Activated CD4-positive, alpha-beta T cell treated with anti-CD3 and anti-CD28 coated beads for 36 hours (primary cell): ENCODE measurements at regions of chr17 and their contacts with region 1.

Region 1: DNA sequence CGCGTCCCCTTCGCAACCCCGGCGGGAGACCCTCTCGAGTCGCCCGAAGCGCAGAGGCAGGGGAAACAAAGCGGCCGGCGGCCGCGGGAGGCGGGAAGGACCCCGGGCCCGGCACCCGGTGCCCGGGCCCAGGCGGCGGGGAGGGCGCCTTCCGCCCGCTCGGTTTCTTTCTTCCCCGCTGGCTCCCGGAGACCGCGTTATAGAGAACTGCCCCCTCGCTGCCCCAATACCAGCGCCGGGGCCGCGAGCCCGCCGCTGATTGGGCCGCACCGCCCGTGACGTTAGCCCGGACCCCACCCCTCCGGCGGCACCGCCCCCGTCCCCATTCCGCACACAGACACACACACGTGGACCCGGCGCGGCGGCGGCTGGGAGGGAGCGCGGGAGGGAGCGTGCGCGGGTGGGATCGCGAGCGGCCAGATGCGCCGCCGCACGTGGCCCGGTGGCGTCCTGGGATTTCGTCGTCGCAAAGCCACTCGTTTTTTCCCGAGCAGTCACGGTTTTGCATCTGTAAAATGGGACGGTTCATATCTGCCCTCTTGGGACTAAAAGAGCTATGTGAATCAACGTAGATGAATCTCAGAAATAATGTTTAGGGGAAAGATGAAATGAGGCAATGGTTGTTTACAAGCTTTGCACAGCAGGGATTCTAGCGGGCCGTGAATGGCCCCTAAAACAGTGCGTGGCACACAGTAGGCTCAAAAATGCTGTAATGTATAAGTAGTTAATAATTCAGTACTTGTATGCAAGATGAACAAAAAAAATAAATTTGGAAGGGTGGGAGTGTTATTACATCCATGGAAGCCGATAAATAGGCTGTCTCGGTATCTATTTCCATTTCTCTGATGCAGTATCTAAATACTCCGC is at the start of gene EPOP:
- DNase-seq: peak; percentile 96
- ATAC-seq: peak; percentile 78
- H3K4me3 Mint-ChIP-seq: peak within 1 kb of the TSS; percentile 76
- H3K27ac Mint-ChIP-seq: peak within 1 kb of the TSS; percentile 85
- H3K4me1 Mint-ChIP-seq: peaks cover 47% of the 10 kb centered on the region
- H3K27me3 Mint-ChIP-seq: peaks cover 9% of the 10 kb centered on the region
- total RNA-seq, gene EPOP: 31.8 to 37.3 TPM

Region 2: DNA sequence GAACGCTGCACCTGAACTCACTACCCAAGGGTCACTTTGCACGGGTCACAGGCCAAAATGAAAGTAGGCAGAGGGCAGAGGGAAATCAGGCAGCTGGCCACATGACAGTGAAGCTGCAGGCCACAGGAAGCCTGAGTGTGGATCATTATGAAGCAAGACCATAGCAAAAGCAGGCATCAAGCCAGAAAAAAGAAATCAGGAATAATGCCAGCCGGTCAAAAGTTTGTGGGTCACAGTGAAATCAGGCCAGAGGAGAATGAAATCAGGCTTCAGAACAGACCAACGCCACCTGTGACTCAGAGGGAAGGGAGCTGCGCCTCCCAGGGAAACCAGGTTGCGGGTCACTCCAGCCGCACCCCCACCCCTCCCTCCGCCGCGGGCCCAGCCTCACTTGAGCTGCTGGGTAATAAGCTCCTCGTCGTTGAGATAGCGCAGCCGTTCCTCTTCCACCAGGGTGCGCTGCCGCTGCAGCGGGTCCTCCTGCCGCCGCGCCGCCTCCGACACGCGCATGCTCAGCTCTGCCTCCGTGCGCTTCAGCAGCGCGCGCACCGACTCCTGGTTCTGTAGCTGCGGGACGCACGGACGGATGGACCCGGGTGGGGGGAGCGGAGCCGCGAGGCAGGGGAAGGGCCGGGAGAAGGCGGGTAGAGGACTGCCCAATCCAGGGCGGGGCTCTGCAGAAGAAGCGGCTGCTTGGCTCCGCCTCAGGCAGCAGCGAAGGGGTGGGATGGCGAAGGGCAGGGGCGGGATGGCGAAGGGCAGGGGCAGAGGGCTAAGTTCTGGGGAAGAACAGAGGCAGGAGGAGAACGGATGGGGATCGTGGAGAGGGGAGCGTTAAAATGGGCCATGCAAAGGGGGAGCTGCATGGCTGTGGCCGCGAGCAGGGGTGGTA is 116.9 kb before region 1 on chr17:
- CTCF ChIA-PET with region 1: interaction called, 145 read pairs
- POLR2A ChIA-PET with region 1: no interaction called
- intact Hi-C with region 1: loop called in 1 of 2 experiments (anchors 2 kb)
- DNase-seq: peak; percentile 95
- ATAC-seq: peak; percentile 85
- H3K4me3 Mint-ChIP-seq: peak overlapping the region; percentile 73
- H3K27ac Mint-ChIP-seq: no peak overlapping the region
- H3K4me1 Mint-ChIP-seq: peaks cover 22% of the 10 kb centered on the region
- H3K27me3 Mint-ChIP-seq: peaks cover 23% of the 10 kb centered on the region

Region 3: DNA sequence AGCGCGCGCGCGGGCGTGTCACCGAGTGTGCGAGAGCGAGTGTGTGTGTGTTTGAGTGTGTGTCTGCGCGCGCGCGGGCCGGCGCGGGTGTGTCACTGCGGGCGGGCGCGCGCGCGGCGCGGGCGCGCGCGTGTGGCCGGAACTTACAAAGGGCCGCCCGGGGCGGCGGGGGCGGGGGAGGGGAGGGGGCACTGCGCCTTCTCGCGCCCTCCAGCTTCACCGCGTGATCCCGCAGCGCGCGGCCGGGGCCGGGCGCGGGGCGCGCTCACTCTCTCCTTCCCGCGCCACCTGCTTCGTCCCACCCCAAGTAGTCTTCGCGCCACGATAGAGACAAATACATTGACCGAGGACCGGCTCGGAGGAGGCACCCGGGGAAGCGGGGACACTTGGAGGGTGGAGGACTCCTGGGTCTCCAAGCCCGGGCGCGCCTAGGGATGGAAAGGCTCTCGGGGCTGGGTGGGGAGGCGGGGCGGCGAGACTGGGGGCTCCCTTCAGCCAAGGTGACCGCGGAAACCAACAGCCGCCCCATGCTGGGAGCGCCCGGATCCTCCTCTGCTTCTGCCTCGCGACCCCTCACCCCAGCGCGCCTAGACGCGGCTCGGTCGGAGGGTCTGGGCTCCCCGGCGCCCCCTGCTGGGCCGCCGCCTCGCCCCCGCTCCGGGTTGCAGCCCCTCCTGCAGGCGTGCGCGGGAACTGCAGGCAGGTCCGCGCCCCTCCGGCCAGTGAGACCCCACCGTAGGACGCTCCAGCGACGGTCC is 68.9 kb before region 1 on chr17 and contains the start of gene SRCIN1:
- CTCF ChIA-PET with region 1: interaction called, 4 read pairs
- POLR2A ChIA-PET with region 1: no interaction called
- intact Hi-C with region 1: loop called in 1 of 2 experiments (anchors 2 kb)
- DNase-seq: peak; percentile 79
- ATAC-seq: peak; percentile 42
- H3K4me3 Mint-ChIP-seq: peak within 1 kb of the TSS; percentile 66
- H3K27ac Mint-ChIP-seq: no peak within 1 kb of the TSS
- H3K4me1 Mint-ChIP-seq: peaks cover 16% of the 10 kb centered on the region
- H3K27me3 Mint-ChIP-seq: peaks cover 56% of the 10 kb centered on the region
- total RNA-seq, gene SRCIN1: 0.72 to 0.73 TPM

Region 4: DNA sequence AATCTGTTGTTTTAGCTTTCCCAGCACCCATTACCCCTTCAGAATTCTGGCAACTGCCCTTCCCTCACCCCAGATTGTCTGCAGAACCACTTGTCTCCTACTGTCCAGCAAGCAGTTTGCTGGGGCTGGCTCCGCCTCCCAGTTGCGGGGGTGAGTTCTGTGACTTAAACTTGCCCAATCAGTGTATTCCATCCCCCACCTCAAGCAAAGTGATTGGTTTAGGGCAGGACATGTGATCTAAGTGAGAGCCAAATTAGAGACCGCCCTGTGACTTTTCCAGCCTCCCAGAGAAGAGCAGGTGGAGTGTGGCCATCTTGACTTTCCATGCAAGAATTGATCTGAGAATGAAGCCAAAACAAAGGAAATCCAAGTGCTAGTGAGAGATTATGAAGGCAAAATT is 46.5 kb before region 1 on chr17:
- CTCF ChIA-PET with region 1: no interaction called
- POLR2A ChIA-PET with region 1: no interaction called
- intact Hi-C with region 1: no loop called
- DNase-seq: peak; percentile 8
- ATAC-seq: no peak
- H3K4me3 Mint-ChIP-seq: no peak overlapping the region
- H3K27ac Mint-ChIP-seq: no peak overlapping the region
- H3K4me1 Mint-ChIP-seq: peaks cover 6% of the 10 kb centered on the region
- H3K27me3 Mint-ChIP-seq: peaks cover 15% of the 10 kb centered on the region

Region 5: GRCh38 chr17:38687286-38687685 is 12.3 kb after region 1 on chr17:
- CTCF ChIA-PET with region 1: interaction called, 20 read pairs
- POLR2A ChIA-PET with region 1: interaction called, 4 read pairs
- intact Hi-C with region 1: no loop called
- DNase-seq: no peak
- ATAC-seq: no peak
- H3K4me3 Mint-ChIP-seq: no peak overlapping the region
- H3K27ac Mint-ChIP-seq: no peak overlapping the region
- H3K4me1 Mint-ChIP-seq: peaks cover 4% of the 10 kb centered on the region
- H3K27me3 Mint-ChIP-seq: peaks cover 2% of the 10 kb centered on the region

Region 6: GRCh38 chr17:38729886-38730525 is 55.0 kb after region 1 on chr17 and contains the start of gene CISD3:
- CTCF ChIA-PET with region 1: interaction called, 35 read pairs
- POLR2A ChIA-PET with region 1: interaction called, 6 read pairs
- intact Hi-C with region 1: loop called (anchors 1 to 2 kb)
- DNase-seq: peak; percentile 92
- ATAC-seq: peak; percentile 66
- H3K4me3 Mint-ChIP-seq: peak within 1 kb of the TSS; percentile 91
- H3K27ac Mint-ChIP-seq: peak within 1 kb of the TSS; percentile 100
- H3K4me1 Mint-ChIP-seq: peaks cover 81% of the 10 kb centered on the region
- H3K27me3 Mint-ChIP-seq: no peaks in the 10 kb centered on the region
- total RNA-seq, gene CISD3: 49.4 to 58.6 TPM

Region 7: DNA sequence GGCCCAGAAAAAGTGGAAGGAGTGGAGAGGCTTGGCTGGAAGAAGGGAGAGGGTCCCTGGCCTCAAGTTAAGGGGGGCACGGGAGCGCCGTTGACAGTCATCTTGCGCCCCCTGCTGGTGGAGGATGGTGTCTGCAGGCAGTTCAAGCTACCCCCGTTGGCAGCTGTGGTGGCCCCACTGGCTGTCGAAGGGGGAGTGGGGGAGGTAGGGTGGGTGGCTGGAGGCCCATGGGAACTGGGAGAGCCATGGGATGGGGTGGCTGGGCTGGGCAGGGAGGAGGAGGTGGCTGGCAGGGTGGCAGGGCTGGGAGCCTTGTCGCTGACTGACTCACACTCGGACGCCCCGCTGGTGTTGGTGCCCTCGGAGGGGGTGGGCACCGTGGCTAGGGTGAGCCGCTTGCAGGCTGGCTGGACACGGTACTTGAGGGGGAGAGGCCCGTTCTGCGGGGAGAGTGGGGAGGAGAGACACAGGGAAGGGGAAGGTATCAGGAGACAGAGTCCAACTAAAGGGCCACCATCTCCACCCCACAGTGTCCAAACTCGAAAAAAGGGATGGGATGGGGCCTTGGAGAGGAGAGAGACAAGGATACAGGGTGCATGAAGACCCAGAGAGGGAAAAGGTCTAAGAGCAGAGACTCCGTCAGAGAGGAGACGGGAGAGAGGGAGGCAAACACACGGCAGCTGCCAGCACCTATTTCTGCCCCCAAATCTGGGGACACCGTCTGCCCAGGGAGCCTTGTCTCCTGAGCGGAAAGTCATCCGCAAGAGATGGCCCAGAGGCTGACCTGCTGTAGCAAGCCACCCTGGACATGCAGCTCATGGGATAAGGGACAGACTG is 60.4 kb after region 1 on chr17:
- CTCF ChIA-PET with region 1: interaction called, 35 read pairs
- POLR2A ChIA-PET with region 1: interaction called, 6 read pairs
- intact Hi-C with region 1: loop called (anchors 1 to 2 kb)
- DNase-seq: peak; percentile 85
- ATAC-seq: peak; percentile 21
- H3K4me3 Mint-ChIP-seq: no peak overlapping the region
- H3K27ac Mint-ChIP-seq: no peak overlapping the region
- H3K4me1 Mint-ChIP-seq: peaks cover 45% of the 10 kb centered on the region
- H3K27me3 Mint-ChIP-seq: no peaks in the 10 kb centered on the region

Region 8: GRCh38 chr17:38853292-38854219 is 178.6 kb after region 1 on chr17 and contains the start of gene RPL23:
- CTCF ChIA-PET with region 1: no interaction called
- POLR2A ChIA-PET with region 1: no interaction called
- intact Hi-C with region 1: loop called in 1 of 2 experiments (anchors 10 kb)
- DNase-seq: peak; percentile 96
- ATAC-seq: peak; percentile 87
- H3K4me3 Mint-ChIP-seq: peak within 1 kb of the TSS; percentile 99
- H3K27ac Mint-ChIP-seq: peak within 1 kb of the TSS; percentile 99
- H3K4me1 Mint-ChIP-seq: peaks cover 46% of the 10 kb centered on the region
- H3K27me3 Mint-ChIP-seq: no peaks in the 10 kb centered on the region
- total RNA-seq, gene RPL23: 1,886 to 1,896 TPM

Region 9: DNA sequence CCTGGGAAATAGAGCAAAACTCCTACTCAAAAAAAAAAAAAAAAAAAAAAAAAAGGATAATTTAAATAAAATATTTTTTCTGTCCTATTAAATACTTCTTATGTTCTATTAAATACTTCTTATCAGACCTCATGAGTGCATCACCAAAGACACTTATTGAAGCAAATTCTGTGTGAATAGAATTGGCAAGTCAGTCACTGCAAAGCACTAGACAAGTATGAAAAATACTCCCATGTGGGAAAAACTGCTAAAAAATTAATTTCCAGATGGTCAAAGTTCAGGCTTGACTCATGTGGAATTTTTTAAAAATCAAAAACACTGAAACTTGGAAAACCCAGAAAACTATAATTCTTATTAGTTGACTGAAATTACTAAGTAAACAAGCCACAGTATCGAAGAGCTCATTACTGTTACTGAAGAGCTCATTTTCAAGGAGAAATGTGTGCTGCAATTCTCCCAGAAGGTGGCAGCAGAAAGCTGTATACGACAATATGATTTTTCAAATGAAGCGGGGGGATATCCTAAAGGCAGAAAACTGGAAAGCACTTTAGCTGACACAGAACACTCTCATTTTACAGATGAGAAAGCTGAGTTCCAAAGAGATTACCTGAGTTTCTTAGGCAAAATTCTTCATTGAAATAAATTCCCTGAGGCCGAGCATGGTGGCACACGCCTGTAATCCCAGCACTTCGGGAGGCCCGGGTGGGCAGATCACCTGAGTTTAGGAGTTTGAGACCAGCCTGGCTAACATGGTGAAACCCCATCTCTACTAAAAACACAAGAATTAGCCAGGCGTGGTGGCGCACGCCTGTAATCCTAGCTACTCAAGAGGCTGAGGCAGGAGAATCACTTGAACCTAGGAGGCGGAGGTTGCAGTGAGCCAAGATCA is 308.1 kb after region 1 on chr17:
- CTCF ChIA-PET with region 1: no interaction called
- POLR2A ChIA-PET with region 1: no interaction called
- intact Hi-C with region 1: no loop called
- DNase-seq: peak; percentile 57
- ATAC-seq: peak; percentile 72
- H3K4me3 Mint-ChIP-seq: no peak overlapping the region
- H3K27ac Mint-ChIP-seq: no peak overlapping the region
- H3K4me1 Mint-ChIP-seq: peaks cover 6% of the 10 kb centered on the region
- H3K27me3 Mint-ChIP-seq: no peaks in the 10 kb centered on the region